ENCODE measurements at regions of chr16 and their contacts with region 1.

Region 1: DNA sequence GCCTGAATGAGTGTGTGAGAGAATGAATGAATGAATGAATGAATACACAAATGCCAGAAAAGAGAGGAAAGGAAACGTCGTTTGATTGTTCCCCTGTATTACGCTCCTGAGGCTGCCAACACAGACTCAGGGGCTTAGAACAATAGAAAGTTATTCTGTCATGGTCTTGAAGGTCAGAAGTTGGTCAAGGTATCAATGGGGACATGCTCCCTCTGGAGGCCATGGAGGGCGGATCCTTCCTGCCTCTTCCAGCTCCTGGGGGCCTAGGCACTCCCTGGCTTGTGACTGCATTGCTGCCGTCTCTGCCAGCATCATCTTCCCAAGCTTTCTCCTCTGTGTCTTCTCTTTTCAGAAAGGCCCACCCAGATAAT is 1.5 kb upstream of the SLC38A8 start:
- DNase-seq: peak; percentile 12

Region 2: GRCh38 chr16:82146957-82147356 is 1897.1 kb before region 1 on chr16:
- intact Hi-C with region 1: loop called in 1 of 2 experiments (anchors 5 kb)
- DNase-seq: no peak

Region 3: GRCh38 chr16:84266451-84266850 is 222.3 kb after region 1 on chr16:
- intact Hi-C with region 1: no loop called
- DNase-seq: peak; percentile 64

Measured in posterior vena cava (tissue), 2 donors.